ENCODE measurements at regions of chr19 and their contacts with region 1.

Region 1: DNA sequence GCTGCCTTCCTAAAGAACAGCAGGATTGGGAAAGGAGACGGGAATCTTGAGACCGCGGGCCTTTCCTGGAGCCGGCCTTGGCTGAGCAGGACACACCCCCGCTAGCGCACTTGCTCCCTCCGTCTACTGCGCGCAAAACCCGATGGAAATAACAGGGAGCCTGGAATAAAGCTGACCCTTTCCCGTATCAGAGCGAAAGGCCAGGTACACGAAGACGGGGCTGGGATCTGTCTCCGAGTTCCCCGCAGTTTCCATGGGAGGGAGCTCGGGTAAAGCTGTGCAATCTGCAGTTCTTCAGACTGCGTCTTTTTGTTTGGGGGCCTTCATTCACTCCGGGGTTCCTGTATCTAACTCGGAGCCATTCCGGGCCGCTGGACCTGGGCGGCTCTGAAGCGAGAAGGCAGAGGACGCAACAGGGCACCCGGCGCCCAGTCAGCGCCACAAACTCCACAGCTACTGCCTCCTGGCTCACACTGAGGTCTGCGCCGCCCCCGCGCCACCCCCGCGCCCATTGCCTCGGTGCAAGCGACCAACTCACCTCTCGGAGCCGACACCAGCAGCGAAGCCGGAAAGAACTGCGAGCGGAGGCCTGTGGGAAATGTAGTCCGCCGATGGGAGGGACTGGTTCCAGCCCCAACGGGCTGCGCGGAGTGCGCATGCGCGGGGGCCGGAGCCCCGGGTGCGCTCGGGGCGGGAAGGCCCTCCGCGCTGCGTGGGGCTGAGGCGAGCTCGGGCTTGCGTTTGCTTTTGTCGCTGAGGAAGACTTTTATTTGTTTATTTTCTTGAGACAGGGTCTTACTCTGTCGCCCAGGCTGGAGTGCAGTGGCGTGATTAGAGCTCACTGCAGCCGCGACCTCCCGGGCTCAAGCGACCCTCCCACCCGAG is at the start of gene ZFP14:
- DNase-seq: peak; percentile 89 to 97 (median 93)
- ATAC-seq: peak; percentile 97
- H3K4me3 ChIP-seq: peak within 1 kb of the TSS; percentile 77
- H3K4me3 Mint-ChIP-seq: peak within 1 kb of the TSS; percentile 98
- H3K27ac ChIP-seq: peak within 1 kb of the TSS; percentile 74 to 84
- H3K27ac Mint-ChIP-seq: peak within 1 kb of the TSS; percentile 99
- H3K4me1 ChIP-seq: peaks cover 18% of the 10 kb centered on the region
- H3K4me1 Mint-ChIP-seq: peaks cover 21% of the 10 kb centered on the region
- H3K27me3 ChIP-seq: no peaks in the 10 kb centered on the region
- H3K27me3 Mint-ChIP-seq: no peaks in the 10 kb centered on the region
- CTCF ChIP-seq: peak; percentile 39
- total RNA-seq, gene ZFP14: 3.7 to 4.4 TPM

Region 2: DNA sequence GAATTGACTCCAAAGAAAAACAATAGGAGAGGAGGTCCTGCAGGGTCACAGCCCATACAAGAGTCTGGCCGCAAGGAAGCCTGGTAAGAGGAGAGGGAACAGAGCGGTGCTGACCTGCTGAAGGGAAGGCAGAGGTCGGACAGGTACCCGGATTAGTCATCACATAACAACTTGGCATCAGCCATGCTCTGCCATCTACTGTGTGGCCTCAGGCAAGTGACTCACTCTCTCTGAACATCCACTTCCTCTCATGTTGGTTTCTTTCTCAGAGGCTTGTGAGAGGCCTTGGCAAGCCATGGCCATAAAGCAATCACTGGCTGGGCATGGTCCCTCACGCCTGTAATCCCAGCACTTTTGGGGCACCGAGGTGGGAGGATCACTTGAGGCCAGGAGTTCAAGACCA is 246.4 kb before region 1 on chr19:
- CTCF ChIA-PET with region 1: no interaction called
- POLR2A ChIA-PET with region 1: interaction called, 3 read pairs
- intact Hi-C with region 1: loop called in 1 of 2 experiments (anchors 5 kb)
- DNase-seq: peak in 7 of 14 experiments; percentile 19 to 62 (median 47)
- ATAC-seq: no peak
- H3K4me3 ChIP-seq: no peak overlapping the region
- H3K4me3 Mint-ChIP-seq: no peak overlapping the region
- H3K27ac ChIP-seq: no peak overlapping the region
- H3K27ac Mint-ChIP-seq: no peak overlapping the region
- H3K4me1 ChIP-seq: peaks cover 39% of the 10 kb centered on the region
- H3K4me1 Mint-ChIP-seq: peaks cover 21% of the 10 kb centered on the region
- H3K27me3 ChIP-seq: no peaks in the 10 kb centered on the region
- H3K27me3 Mint-ChIP-seq: no peaks in the 10 kb centered on the region
- CTCF ChIP-seq: no peak

Region 3: GRCh38 chr19:36498861-36499260 is 120.0 kb after region 1 on chr19:
- CTCF ChIA-PET with region 1: no interaction called
- POLR2A ChIA-PET with region 1: no interaction called
- intact Hi-C with region 1: no loop called
- DNase-seq: no peak
- ATAC-seq: no peak
- H3K4me3 ChIP-seq: no peak overlapping the region
- H3K4me3 Mint-ChIP-seq: no peak overlapping the region
- H3K27ac ChIP-seq: no peak overlapping the region
- H3K27ac Mint-ChIP-seq: no peak overlapping the region
- H3K4me1 ChIP-seq: no peaks in the 10 kb centered on the region
- H3K4me1 Mint-ChIP-seq: no peaks in the 10 kb centered on the region
- H3K27me3 ChIP-seq: no peaks in the 10 kb centered on the region
- H3K27me3 Mint-ChIP-seq: no peaks in the 10 kb centered on the region
- CTCF ChIP-seq: no peak

Region 4: GRCh38 chr19:36528194-36528920 is 149.5 kb after region 1 on chr19 and contains the start of gene ZNF260:
- CTCF ChIA-PET with region 1: no interaction called
- POLR2A ChIA-PET with region 1: interaction called, 14 read pairs
- intact Hi-C with region 1: no loop called
- DNase-seq: peak; percentile 82 to 97 (median 88)
- ATAC-seq: peak; percentile 87
- H3K4me3 ChIP-seq: peak within 1 kb of the TSS; percentile 80
- H3K4me3 Mint-ChIP-seq: peak within 1 kb of the TSS; percentile 97
- H3K27ac ChIP-seq: peak within 1 kb of the TSS; percentile 72 to 90
- H3K27ac Mint-ChIP-seq: peak within 1 kb of the TSS; percentile 93
- H3K4me1 ChIP-seq: peaks cover 19% of the 10 kb centered on the region
- H3K4me1 Mint-ChIP-seq: peaks cover 29% of the 10 kb centered on the region
- H3K27me3 ChIP-seq: no peaks in the 10 kb centered on the region
- H3K27me3 Mint-ChIP-seq: no peaks in the 10 kb centered on the region
- CTCF ChIP-seq: no peak
- total RNA-seq, gene ZNF260: 2.0 to 5.0 TPM

Region 5: GRCh38 chr19:36772311-36773222 is 393.7 kb after region 1 on chr19 and contains the start of gene ZNF850:
- CTCF ChIA-PET with region 1: no interaction called
- POLR2A ChIA-PET with region 1: interaction called, 4 read pairs
- intact Hi-C with region 1: loop called in 1 of 2 experiments (anchors 2 kb)
- DNase-seq: peak; percentile 87 to 96 (median 93)
- ATAC-seq: peak; percentile 94
- H3K4me3 ChIP-seq: peak within 1 kb of the TSS; percentile 91
- H3K4me3 Mint-ChIP-seq: peak within 1 kb of the TSS; percentile 95
- H3K27ac ChIP-seq: peak within 1 kb of the TSS; percentile 78 to 94
- H3K27ac Mint-ChIP-seq: peak within 1 kb of the TSS; percentile 84
- H3K4me1 ChIP-seq: peaks cover 20% of the 10 kb centered on the region
- H3K4me1 Mint-ChIP-seq: peaks cover 20% of the 10 kb centered on the region
- H3K27me3 ChIP-seq: no peaks in the 10 kb centered on the region
- H3K27me3 Mint-ChIP-seq: no peaks in the 10 kb centered on the region
- CTCF ChIP-seq: no peak
- total RNA-seq, gene ZNF850: 0.77 to 2.1 TPM

Region 6: DNA sequence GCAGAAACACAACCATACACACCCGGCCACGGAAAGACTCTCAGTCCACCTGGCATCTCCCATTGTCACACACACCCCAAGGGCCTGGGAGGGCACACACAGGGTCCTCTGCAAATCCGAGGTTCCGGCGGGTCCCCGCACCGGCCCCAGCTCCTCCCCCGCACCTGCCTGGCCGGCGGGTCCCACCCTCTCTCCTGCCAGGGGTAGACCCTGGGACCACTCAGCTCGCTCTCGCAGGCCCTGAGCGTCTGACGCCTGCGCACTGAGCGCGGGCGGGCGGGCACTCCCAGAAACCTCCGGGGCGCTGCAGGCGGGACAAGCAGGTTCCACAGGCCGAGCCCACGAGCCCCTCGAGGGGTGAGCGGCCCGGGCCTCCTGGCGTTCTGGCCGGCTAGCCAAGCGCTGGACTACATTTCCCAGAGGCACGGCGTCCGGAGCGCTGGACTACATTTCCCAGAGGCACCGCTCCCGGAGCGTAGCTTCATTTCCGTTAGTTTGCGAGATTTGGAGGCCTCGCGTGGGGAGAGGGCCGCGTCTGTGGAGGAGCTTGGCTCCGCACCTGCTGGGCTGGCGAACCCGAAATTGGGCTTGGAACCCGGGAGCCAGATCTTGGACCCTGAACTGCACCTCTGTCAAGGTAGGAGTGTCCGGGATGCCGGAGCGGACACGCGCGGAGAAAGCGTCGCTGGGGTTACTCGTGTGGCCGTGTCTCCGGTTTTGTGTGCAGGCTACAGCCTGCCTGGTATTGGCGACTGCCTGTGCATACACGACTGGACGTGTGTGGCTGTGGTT is 699.3 kb after region 1 on chr19 and contains the start of gene ZNF420:
- CTCF ChIA-PET with region 1: interaction called, 3 read pairs
- POLR2A ChIA-PET with region 1: no interaction called
- intact Hi-C with region 1: loop called in 1 of 2 experiments (anchors 2 kb)
- DNase-seq: peak; percentile 75 to 95 (median 84)
- ATAC-seq: peak; percentile 95
- H3K4me3 ChIP-seq: peak within 1 kb of the TSS; percentile 99
- H3K4me3 Mint-ChIP-seq: peak within 1 kb of the TSS; percentile 98
- H3K27ac ChIP-seq: peak within 1 kb of the TSS; percentile 65 to 72
- H3K27ac Mint-ChIP-seq: peak within 1 kb of the TSS; percentile 91
- H3K4me1 ChIP-seq: peaks cover 25% of the 10 kb centered on the region
- H3K4me1 Mint-ChIP-seq: peaks cover 30% of the 10 kb centered on the region
- H3K27me3 ChIP-seq: no peaks in the 10 kb centered on the region
- H3K27me3 Mint-ChIP-seq: no peaks in the 10 kb centered on the region
- CTCF ChIP-seq: no peak
- total RNA-seq, gene ZNF420: 3.7 to 4.5 TPM

Region 7: GRCh38 chr19:37466798-37467607 is 1088.1 kb after region 1 on chr19 and contains the start of gene ZNF569:
- CTCF ChIA-PET with region 1: no interaction called
- POLR2A ChIA-PET with region 1: no interaction called
- intact Hi-C with region 1: loop called in 1 of 2 experiments (anchors 5 kb)
- DNase-seq: peak; percentile 81 to 96 (median 86)
- ATAC-seq: peak; percentile 63
- H3K4me3 ChIP-seq: peak within 1 kb of the TSS; percentile 82
- H3K4me3 Mint-ChIP-seq: peak within 1 kb of the TSS; percentile 93
- H3K27ac ChIP-seq: peak within 1 kb of the TSS; percentile 83 to 87
- H3K27ac Mint-ChIP-seq: peak within 1 kb of the TSS; percentile 100
- H3K4me1 ChIP-seq: peaks cover 32% of the 10 kb centered on the region
- H3K4me1 Mint-ChIP-seq: peaks cover 44% of the 10 kb centered on the region
- H3K27me3 ChIP-seq: no peaks in the 10 kb centered on the region
- H3K27me3 Mint-ChIP-seq: no peaks in the 10 kb centered on the region
- CTCF ChIP-seq: no peak
- total RNA-seq, gene ZNF569: 5.0 to 5.2 TPM

Measured in CD4-positive, alpha-beta T cell (primary cell).